ENCODE measurements at regions of chr6 and their contacts with region 1.

Region 1: GRCh38 chr6:145734486-145735355 is 599 bp downstream of the EPM2A start:
- DNase-seq: peak; percentile 85
- ATAC-seq: peak; percentile 92
- H3K4me3 ChIP-seq: peak overlapping the region; percentile 69
- H3K27ac ChIP-seq: peak overlapping the region; percentile 95
- H3K4me1 ChIP-seq: no peaks in the 10 kb centered on the region
- H3K27me3 ChIP-seq: no peaks in the 10 kb centered on the region
- CTCF ChIP-seq: no peak
- POLR2A ChIP-seq: peak; percentile 87; the same call in 1 of the 2 replicates
- RAD21 ChIP-seq: no peak; the same call in 1 of the 2 replicates

Region 2: DNA sequence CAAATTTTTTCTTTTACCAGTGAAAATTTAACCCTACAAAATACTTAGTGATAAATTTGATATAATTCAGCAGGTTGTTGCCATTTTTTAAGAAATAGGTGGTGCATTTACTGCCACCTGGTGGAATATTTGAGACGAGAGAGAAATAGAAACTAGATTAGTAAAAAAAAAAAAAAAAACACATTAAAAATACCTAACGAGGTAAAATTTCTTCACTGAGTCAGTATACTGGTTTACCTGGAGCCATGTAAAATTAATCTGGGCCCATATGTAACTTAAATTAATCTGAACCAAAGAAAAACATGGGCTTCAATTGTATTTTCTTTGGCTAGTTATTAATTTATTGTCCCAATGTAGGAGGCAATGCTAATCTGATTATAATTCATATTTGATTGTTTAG is 520.2 kb before region 1 on chr6:
- CTCF ChIA-PET with region 1: no interaction called
- POLR2A ChIA-PET with region 1: no interaction called
- dilution Hi-C with region 1: no loop called
- in situ Hi-C with region 1: no loop called
- intact Hi-C with region 1: no loop called
- DNase-seq: peak; percentile 39
- ATAC-seq: no peak
- H3K4me3 ChIP-seq: no peak overlapping the region
- H3K27ac ChIP-seq: no peak overlapping the region
- H3K4me1 ChIP-seq: no peaks in the 10 kb centered on the region
- H3K27me3 ChIP-seq: no peaks in the 10 kb centered on the region
- CTCF ChIP-seq: peak; percentile 63
- POLR2A ChIP-seq: no peak
- RAD21 ChIP-seq: peak; percentile 72

Region 3: DNA sequence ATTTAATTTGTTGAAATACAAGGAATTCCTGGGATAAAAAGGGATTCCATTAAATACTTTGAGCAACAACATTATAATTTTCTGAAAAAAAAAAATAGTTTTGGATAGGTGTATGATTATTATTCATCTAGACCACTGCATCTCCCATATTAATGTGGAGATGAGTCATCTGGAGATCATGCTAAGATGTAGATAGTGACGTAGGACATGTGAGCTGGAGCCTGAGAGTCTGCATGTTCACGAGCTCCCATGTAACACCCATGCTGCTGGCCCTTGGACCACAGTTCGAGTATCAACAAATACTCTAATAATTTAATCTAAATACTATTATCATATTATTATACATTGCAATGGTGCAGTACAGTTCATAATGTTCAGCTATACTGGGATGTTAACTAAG is 91.0 kb before region 1 on chr6:
- CTCF ChIA-PET with region 1: no interaction called
- POLR2A ChIA-PET with region 1: no interaction called
- dilution Hi-C with region 1: no loop called
- in situ Hi-C with region 1: no loop called
- intact Hi-C with region 1: no loop called
- DNase-seq: peak; percentile 83
- ATAC-seq: no peak
- H3K4me3 ChIP-seq: no peak overlapping the region
- H3K27ac ChIP-seq: no peak overlapping the region
- H3K4me1 ChIP-seq: no peaks in the 10 kb centered on the region
- H3K27me3 ChIP-seq: no peaks in the 10 kb centered on the region
- CTCF ChIP-seq: no peak
- POLR2A ChIP-seq: no peak
- RAD21 ChIP-seq: no peak

Region 4: GRCh38 chr6:145699462-145699861 is 35.3 kb before region 1 on chr6:
- CTCF ChIA-PET with region 1: no interaction called
- POLR2A ChIA-PET with region 1: no interaction called
- dilution Hi-C with region 1: no loop called
- in situ Hi-C with region 1: no loop called
- intact Hi-C with region 1: no loop called
- DNase-seq: peak; percentile 82
- ATAC-seq: peak; percentile 81
- H3K4me3 ChIP-seq: no peak overlapping the region
- H3K27ac ChIP-seq: no peak overlapping the region
- H3K4me1 ChIP-seq: peaks cover 2% of the 10 kb centered on the region; the same call in 1 of the 2 replicates
- H3K27me3 ChIP-seq: no peaks in the 10 kb centered on the region
- CTCF ChIP-seq: no peak
- POLR2A ChIP-seq: no peak
- RAD21 ChIP-seq: no peak

Region 5: GRCh38 chr6:145749632-145750031 is 14.9 kb after region 1 on chr6:
- CTCF ChIA-PET with region 1: no interaction called
- POLR2A ChIA-PET with region 1: no interaction called
- dilution Hi-C with region 1: no loop called
- in situ Hi-C with region 1: no loop called
- intact Hi-C with region 1: loop called (anchors 1 kb)
- DNase-seq: peak; percentile 85
- ATAC-seq: peak; percentile 98
- H3K4me3 ChIP-seq: no peak overlapping the region
- H3K27ac ChIP-seq: peak overlapping the region; percentile 31; the same call in 1 of the 2 replicates
- H3K4me1 ChIP-seq: no peaks in the 10 kb centered on the region; the same call in 1 of the 2 replicates
- H3K27me3 ChIP-seq: no peaks in the 10 kb centered on the region
- CTCF ChIP-seq: no peak
- POLR2A ChIP-seq: no peak
- RAD21 ChIP-seq: no peak

Region 6: DNA sequence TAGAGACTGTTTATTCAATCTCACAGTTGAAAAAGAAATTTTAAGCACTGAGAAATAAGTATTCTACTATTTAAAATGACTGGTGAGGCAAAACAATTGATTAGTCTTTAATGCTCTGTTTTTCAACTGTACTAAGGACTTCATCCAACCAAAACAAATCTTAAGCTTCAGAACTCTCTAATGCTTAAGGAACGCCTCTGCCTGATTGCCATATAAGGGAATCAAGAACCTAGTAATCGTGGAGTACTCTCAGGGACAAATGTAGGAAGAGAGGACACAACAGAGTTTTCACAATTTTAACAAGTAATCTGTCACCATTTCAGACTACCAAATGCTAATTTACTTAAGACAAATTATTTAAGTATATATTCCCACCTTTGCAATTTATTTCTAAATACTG is 63.8 kb after region 1 on chr6:
- CTCF ChIA-PET with region 1: no interaction called
- POLR2A ChIA-PET with region 1: no interaction called
- dilution Hi-C with region 1: no loop called
- in situ Hi-C with region 1: no loop called
- intact Hi-C with region 1: loop called (anchors 5 kb)
- DNase-seq: peak; percentile 62
- ATAC-seq: peak; percentile 77
- H3K4me3 ChIP-seq: no peak overlapping the region
- H3K27ac ChIP-seq: no peak overlapping the region
- H3K4me1 ChIP-seq: no peaks in the 10 kb centered on the region
- H3K27me3 ChIP-seq: no peaks in the 10 kb centered on the region
- CTCF ChIP-seq: no peak
- POLR2A ChIP-seq: no peak
- RAD21 ChIP-seq: no peak

Region 7: GRCh38 chr6:145814501-145815308 is 80.0 kb after region 1 on chr6 and contains the start of gene FBXO30:
- CTCF ChIA-PET with region 1: no interaction called
- POLR2A ChIA-PET with region 1: no interaction called
- dilution Hi-C with region 1: no loop called
- in situ Hi-C with region 1: loop called (anchors 5 kb)
- intact Hi-C with region 1: loop called (anchors 1 kb)
- DNase-seq: peak; percentile 80
- ATAC-seq: peak; percentile 86
- H3K4me3 ChIP-seq: peak within 1 kb of the TSS; percentile 99
- H3K27ac ChIP-seq: peak within 1 kb of the TSS; percentile 93
- H3K4me1 ChIP-seq: peaks cover 6% of the 10 kb centered on the region
- H3K27me3 ChIP-seq: no peaks in the 10 kb centered on the region
- CTCF ChIP-seq: no peak
- POLR2A ChIP-seq: peak; percentile 90
- RAD21 ChIP-seq: no peak
- total RNA-seq, gene FBXO30: 9.3 and 15.3 TPM in 2 replicates

Region 8: DNA sequence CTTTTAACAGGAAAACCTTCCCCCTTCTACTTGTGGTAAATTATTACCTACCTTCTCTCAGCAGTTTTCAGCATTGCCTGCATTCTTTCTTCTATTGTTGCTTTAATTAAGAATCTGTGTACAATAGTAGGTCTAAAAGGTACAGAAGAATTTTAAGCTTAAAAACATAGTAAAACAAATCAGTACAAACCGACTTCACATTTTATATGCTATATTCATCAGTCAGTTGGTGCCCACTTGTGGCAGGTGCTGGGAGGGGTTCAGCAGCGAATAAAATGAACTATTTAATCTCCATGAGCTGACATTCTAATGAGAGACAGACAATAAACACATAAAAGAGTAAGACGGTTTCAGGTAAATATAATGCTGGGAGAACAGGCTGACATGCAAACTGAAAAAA is 153.2 kb after region 1 on chr6:
- CTCF ChIA-PET with region 1: no interaction called
- POLR2A ChIA-PET with region 1: no interaction called
- dilution Hi-C with region 1: no loop called
- in situ Hi-C with region 1: loop called (anchors 25 kb)
- intact Hi-C with region 1: loop called (anchors 5 kb)
- DNase-seq: peak; percentile 42
- ATAC-seq: no peak
- H3K4me3 ChIP-seq: no peak overlapping the region
- H3K27ac ChIP-seq: no peak overlapping the region
- H3K4me1 ChIP-seq: peaks cover 8% of the 10 kb centered on the region
- H3K27me3 ChIP-seq: no peaks in the 10 kb centered on the region
- CTCF ChIP-seq: peak; percentile 67
- POLR2A ChIP-seq: no peak
- RAD21 ChIP-seq: peak; percentile 67

Measured in IMR-90 (cell line).